CD4-positive, alpha-beta T cell (primary cell): ENCODE measurements at regions of chr17 and their contacts with region 1.

Region 1: DNA sequence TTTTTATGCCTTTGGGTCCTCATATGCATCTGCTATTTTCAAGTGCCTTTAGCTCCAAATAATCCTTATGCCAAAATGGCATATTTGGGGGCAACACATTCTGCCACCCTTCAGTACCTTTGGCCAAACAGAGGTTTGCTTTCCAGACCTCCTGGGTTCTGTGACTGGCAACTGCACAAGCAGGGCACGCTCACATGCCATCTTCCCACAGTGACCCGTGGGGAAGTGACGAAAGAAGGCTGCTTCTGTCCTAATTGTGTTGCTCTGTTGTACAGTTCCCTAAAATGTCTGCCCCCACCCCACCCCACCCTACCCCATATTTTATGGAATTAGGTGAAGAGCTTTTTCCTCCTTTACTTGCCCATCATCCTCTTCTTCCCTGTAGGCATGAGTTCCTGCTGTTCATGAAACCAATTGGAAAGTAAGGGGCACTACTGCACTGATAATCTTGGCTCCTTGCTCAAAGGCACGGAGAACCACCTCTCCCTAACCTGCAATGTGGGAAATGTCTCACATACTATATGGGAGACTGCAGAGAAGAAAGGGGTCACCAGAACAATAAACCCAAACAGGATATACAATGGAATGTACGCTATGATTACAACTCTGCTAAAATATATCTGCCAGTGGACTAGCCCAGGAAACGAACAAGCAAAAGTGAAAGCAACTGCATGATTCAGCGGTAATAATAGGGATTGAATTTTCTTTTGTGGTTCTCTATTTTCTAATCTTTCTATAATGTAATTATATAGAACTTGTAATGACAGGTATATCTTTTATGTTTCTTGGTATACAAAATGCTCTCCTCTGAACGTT is 3.3 kb upstream of the SLFN12L start:
- DNase-seq: peak in 7 of 14 experiments; percentile 21 to 83 (median 59)
- ATAC-seq: peak; percentile 47
- H3K4me3 ChIP-seq: peak overlapping the region; percentile 56
- H3K4me3 Mint-ChIP-seq: peak overlapping the region; percentile 93
- H3K27ac ChIP-seq: peak overlapping the region; percentile 67 to 85
- H3K27ac Mint-ChIP-seq: peak overlapping the region; percentile 82
- H3K4me1 ChIP-seq: peaks cover 23% of the 10 kb centered on the region
- H3K4me1 Mint-ChIP-seq: peaks cover 60% of the 10 kb centered on the region
- H3K27me3 ChIP-seq: no peaks in the 10 kb centered on the region
- H3K27me3 Mint-ChIP-seq: no peaks in the 10 kb centered on the region
- CTCF ChIP-seq: no peak

Region 2: DNA sequence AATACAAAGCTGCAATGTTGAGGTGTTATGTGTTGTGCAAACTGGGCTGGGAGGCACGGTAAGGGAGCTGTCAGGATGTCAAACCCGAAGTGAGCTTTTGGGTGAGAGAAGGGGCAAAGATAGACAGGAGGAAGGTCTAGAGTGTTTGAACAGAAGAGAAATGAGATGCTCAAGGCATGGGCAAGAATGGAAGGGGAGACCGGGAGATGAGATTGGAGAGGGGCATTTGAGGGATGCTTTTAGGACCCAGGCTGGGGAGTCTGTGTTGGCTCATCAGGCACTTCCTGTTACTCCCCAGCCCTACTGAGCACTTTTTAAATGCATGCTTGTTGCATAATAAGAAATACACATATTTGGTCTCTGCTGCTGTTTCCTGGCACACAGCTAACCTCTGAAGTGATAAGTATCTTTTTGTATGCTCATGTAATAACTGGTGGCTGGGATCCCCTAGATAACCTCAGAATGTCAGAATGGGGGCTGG is 379.5 kb before region 1 on chr17:
- CTCF ChIA-PET with region 1: interaction called, 5 read pairs
- POLR2A ChIA-PET with region 1: interaction called, 10 read pairs
- intact Hi-C with region 1: no loop called
- DNase-seq: peak in 6 of 14 experiments; percentile 15 to 78 (median 56)
- ATAC-seq: peak; percentile 70
- H3K4me3 ChIP-seq: peak overlapping the region; percentile 30
- H3K4me3 Mint-ChIP-seq: peak overlapping the region; percentile 67
- H3K27ac ChIP-seq: peak overlapping the region; percentile 62 to 68
- H3K27ac Mint-ChIP-seq: peak overlapping the region; percentile 89
- H3K4me1 ChIP-seq: peaks cover 53% of the 10 kb centered on the region
- H3K4me1 Mint-ChIP-seq: peaks cover 66% of the 10 kb centered on the region
- H3K27me3 ChIP-seq: no peaks in the 10 kb centered on the region
- H3K27me3 Mint-ChIP-seq: no peaks in the 10 kb centered on the region
- CTCF ChIP-seq: no peak

Region 3: GRCh38 chr17:35373534-35373983 is 167.2 kb before region 1 on chr17 and contains the start of gene SLFN11:
- CTCF ChIA-PET with region 1: no interaction called
- POLR2A ChIA-PET with region 1: interaction called, 23 read pairs
- intact Hi-C with region 1: loop called in 1 of 2 experiments (anchors 5 kb)
- DNase-seq: peak; percentile 50 to 94 (median 71)
- ATAC-seq: peak; percentile 88
- H3K4me3 ChIP-seq: peak within 1 kb of the TSS; percentile 84
- H3K4me3 Mint-ChIP-seq: peak within 1 kb of the TSS; percentile 96
- H3K27ac ChIP-seq: peak within 1 kb of the TSS; percentile 80 to 96
- H3K27ac Mint-ChIP-seq: peak within 1 kb of the TSS; percentile 95
- H3K4me1 ChIP-seq: peaks cover 16% of the 10 kb centered on the region
- H3K4me1 Mint-ChIP-seq: peaks cover 62% of the 10 kb centered on the region
- H3K27me3 ChIP-seq: no peaks in the 10 kb centered on the region
- H3K27me3 Mint-ChIP-seq: no peaks in the 10 kb centered on the region
- CTCF ChIP-seq: no peak
- total RNA-seq, gene SLFN11: 16.5 to 18.5 TPM

Region 4: GRCh38 chr17:35521150-35521549 is 19.6 kb before region 1 on chr17:
- CTCF ChIA-PET with region 1: interaction called, 5 read pairs
- POLR2A ChIA-PET with region 1: interaction called, 10 read pairs
- intact Hi-C with region 1: no loop called
- DNase-seq: no peak
- ATAC-seq: no peak
- H3K4me3 ChIP-seq: no peak overlapping the region
- H3K4me3 Mint-ChIP-seq: no peak overlapping the region
- H3K27ac ChIP-seq: no peak overlapping the region
- H3K27ac Mint-ChIP-seq: peak overlapping the region; percentile 77
- H3K4me1 ChIP-seq: peaks cover 56% of the 10 kb centered on the region
- H3K4me1 Mint-ChIP-seq: peaks cover 100% of the 10 kb centered on the region
- H3K27me3 ChIP-seq: no peaks in the 10 kb centered on the region
- H3K27me3 Mint-ChIP-seq: no peaks in the 10 kb centered on the region
- CTCF ChIP-seq: no peak